Activated CD8-positive, alpha-beta T cell treated with anti-CD3 and anti-CD28 coated beads for 36 hours (primary cell): ENCODE measurements at regions of chr3 and their contacts with region 1.

Region 1: DNA sequence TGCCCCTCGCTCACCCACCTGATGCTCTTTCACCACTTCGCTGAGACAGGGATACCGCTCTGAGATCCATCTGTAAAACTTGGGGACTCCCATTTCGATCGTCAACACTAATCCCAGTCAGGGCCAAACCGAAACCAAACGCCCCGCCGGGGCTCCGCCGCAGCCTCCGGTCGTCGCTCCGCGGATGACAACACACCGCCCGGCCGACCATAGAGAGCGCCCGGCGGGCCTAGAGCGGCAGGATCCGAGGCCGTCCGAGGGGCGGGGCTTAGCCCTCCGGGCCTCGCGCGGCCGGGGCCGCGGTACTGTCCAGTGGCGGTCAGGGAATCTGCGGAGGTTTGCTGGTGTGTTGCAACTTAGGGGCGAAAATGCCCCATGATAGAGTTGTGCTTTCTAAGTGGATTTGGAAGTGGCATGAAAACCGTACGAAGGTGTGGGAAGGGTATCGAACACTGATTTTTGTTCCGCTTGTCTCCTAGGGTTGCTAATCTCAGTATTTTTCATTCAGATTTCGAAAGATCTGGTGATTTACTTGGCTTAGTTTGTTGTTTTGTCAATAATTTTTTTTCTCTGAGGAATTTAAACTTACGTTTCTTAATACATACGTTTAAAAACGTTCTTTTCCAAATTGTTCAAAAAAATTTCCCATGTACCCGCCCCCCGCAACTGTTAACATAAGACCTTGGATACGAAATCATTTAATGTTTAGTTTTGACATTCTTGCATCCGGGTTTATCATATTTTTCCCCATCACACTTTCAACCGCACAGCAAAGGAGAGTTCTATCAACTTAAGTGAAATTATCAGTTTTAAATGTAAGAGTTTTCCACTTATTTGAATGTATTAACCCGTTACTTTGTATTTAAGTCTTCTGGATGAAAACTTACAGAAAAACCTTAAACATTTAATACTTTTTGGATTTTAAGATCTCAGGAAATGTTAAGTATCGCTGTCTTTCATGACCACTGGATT is at the start of gene XRN1:
- DNase-seq: peak; percentile 96
- ATAC-seq: peak; percentile 93
- H3K4me3 Mint-ChIP-seq: peak within 1 kb of the TSS; percentile 96
- H3K27ac Mint-ChIP-seq: peak within 1 kb of the TSS; percentile 98
- H3K4me1 Mint-ChIP-seq: peaks cover 26% of the 10 kb centered on the region
- H3K27me3 Mint-ChIP-seq: no peaks in the 10 kb centered on the region
- CTCF ChIP-seq: no peak
- total RNA-seq, gene XRN1: 41.3 to 43.5 TPM

Region 2: GRCh38 chr3:142315083-142315482 is 133.1 kb before region 1 on chr3:
- CTCF ChIA-PET with region 1: no interaction called
- POLR2A ChIA-PET with region 1: no interaction called
- intact Hi-C with region 1: no loop called
- DNase-seq: no peak
- ATAC-seq: no peak
- H3K4me3 Mint-ChIP-seq: no peak overlapping the region
- H3K27ac Mint-ChIP-seq: no peak overlapping the region
- H3K4me1 Mint-ChIP-seq: peaks cover 2% of the 10 kb centered on the region
- H3K27me3 Mint-ChIP-seq: no peaks in the 10 kb centered on the region
- CTCF ChIP-seq: no peak

Region 3: GRCh38 chr3:142433110-142433509 is 15.0 kb before region 1 on chr3:
- CTCF ChIA-PET with region 1: no interaction called
- POLR2A ChIA-PET with region 1: no interaction called
- intact Hi-C with region 1: no loop called
- DNase-seq: no peak
- ATAC-seq: no peak
- H3K4me3 Mint-ChIP-seq: no peak overlapping the region
- H3K27ac Mint-ChIP-seq: no peak overlapping the region
- H3K4me1 Mint-ChIP-seq: peaks cover 37% of the 10 kb centered on the region
- H3K27me3 Mint-ChIP-seq: no peaks in the 10 kb centered on the region
- CTCF ChIP-seq: no peak

Region 4: GRCh38 chr3:142509079-142509478 is 60.9 kb after region 1 on chr3:
- CTCF ChIA-PET with region 1: interaction called, 4 read pairs
- POLR2A ChIA-PET with region 1: interaction called, 4 read pairs
- intact Hi-C with region 1: loop called (anchors 5 kb)
- DNase-seq: peak; percentile 11
- ATAC-seq: peak; percentile 64
- H3K4me3 Mint-ChIP-seq: peak overlapping the region; percentile 70
- H3K27ac Mint-ChIP-seq: peak overlapping the region; percentile 92
- H3K4me1 Mint-ChIP-seq: peaks cover 23% of the 10 kb centered on the region
- H3K27me3 Mint-ChIP-seq: no peaks in the 10 kb centered on the region
- CTCF ChIP-seq: no peak

Region 5: DNA sequence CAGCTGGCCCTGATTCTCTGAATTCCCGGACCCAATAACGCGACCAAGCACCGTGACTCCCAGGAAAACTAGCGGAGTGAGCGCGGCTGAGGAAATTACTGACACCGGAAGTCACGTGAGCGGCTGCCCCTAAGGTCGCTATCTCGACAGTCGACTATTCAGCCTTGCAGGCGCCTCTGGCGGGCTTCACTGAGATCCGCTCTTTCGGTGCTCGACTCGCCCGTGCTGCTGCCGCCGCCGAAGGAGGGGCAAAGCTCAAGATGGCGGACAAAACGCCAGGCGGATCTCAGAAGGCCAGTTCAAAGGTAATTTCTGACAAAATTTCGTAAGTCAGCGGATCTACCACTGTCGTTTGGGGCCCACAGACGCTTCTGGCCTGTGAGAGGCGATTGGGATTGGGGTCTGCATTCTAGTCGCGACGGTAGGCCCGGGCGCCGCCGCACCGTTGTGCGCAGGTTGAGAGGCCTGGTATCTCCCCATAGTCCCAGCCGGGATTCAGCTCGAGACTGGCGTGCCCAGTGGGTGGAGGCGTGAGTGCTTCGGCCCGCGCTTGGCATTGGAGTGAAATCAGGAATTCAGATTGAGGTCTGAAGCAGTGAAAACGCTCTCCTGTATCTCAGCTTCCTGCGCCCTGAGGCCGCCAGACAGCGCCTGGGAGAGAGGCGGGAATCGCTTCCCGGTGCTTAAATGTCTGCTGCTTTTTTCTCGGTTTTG is 553.4 kb after region 1 on chr3 and contains the start of gene U2SURP:
- CTCF ChIA-PET with region 1: no interaction called
- POLR2A ChIA-PET with region 1: interaction called, 4 read pairs
- intact Hi-C with region 1: loop called (anchors 5 kb)
- DNase-seq: peak; percentile 96
- ATAC-seq: peak; percentile 90
- H3K4me3 Mint-ChIP-seq: peak within 1 kb of the TSS; percentile 92
- H3K27ac Mint-ChIP-seq: peak within 1 kb of the TSS; percentile 100
- H3K4me1 Mint-ChIP-seq: peaks cover 29% of the 10 kb centered on the region
- H3K27me3 Mint-ChIP-seq: peaks cover 4% of the 10 kb centered on the region
- CTCF ChIP-seq: no peak
- total RNA-seq, gene U2SURP: 160 to 174 TPM